HepG2 (cell line): ENCODE measurements at regions of chr7 and their contacts with region 1.

Region 1: DNA sequence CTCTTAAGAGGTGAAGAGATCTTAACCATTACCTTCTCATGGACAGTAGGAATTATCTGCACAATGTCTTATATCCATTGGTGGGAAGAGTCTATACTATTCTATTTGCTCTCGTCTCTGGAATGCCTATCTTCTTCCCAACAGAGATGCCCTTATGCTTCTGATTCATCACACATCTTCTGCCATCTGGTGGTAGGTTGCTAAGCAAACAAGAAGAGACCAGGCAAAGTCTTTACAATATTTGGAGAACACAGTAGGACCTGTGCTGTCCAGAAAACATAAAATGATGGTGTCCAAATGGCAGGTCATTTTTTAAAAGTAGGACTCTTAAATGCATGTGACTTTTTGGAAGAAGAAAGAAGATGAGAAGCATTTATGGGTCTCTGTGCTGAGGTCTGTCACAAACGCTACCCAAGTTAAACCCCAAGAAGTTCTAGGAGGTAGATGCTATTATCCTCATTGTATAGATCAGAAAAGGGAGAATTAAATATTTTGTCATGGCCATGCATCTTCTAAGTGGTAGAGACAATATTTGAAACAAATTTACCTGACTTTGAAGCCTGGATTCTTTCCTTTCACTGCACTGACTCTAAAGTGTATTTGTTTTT is 67.8 kb upstream of the NXPH1 start:
- DNase-seq: peak; percentile 37
- ATAC-seq: peak; percentile 77
- H3K4me3 ChIP-seq: no peak overlapping the region
- H3K27ac ChIP-seq: no peak overlapping the region
- H3K4me1 ChIP-seq: no peaks in the 10 kb centered on the region
- H3K27me3 ChIP-seq: no peaks in the 10 kb centered on the region
- CTCF ChIP-seq: peak; percentile 48
- EP300 ChIP-seq: no peak
- POLR2A ChIP-seq: no peak
- RAD21 ChIP-seq: no peak

Region 2: GRCh38 chr7:8149222-8149621 is 216.4 kb before region 1 on chr7:
- CTCF ChIA-PET with region 1: no interaction called
- POLR2A ChIA-PET with region 1: no interaction called
- in situ Hi-C with region 1: no loop called
- intact Hi-C with region 1: no loop called
- DNase-seq: no peak
- ATAC-seq: no peak
- H3K4me3 ChIP-seq: no peak overlapping the region
- H3K27ac ChIP-seq: no peak overlapping the region
- H3K4me1 ChIP-seq: no peaks in the 10 kb centered on the region
- H3K27me3 ChIP-seq: no peaks in the 10 kb centered on the region
- CTCF ChIP-seq: no peak
- EP300 ChIP-seq: no peak
- POLR2A ChIP-seq: no peak
- RAD21 ChIP-seq: no peak

Region 3: GRCh38 chr7:8277394-8277982 is 88.1 kb before region 1 on chr7:
- CTCF ChIA-PET with region 1: interaction called, 4 read pairs
- POLR2A ChIA-PET with region 1: no interaction called
- in situ Hi-C with region 1: no loop called
- intact Hi-C with region 1: loop called (anchors 1 kb)
- DNase-seq: peak; percentile 29
- ATAC-seq: peak; percentile 74
- H3K4me3 ChIP-seq: no peak overlapping the region
- H3K27ac ChIP-seq: no peak overlapping the region
- H3K4me1 ChIP-seq: no peaks in the 10 kb centered on the region
- H3K27me3 ChIP-seq: no peaks in the 10 kb centered on the region
- CTCF ChIP-seq: peak; percentile 51; the same call in 1 of the 2 replicates
- EP300 ChIP-seq: no peak
- POLR2A ChIP-seq: no peak
- RAD21 ChIP-seq: 0 out of 2 replicates have a peak, but pooled peaks have one; percentile 16

Region 4: DNA sequence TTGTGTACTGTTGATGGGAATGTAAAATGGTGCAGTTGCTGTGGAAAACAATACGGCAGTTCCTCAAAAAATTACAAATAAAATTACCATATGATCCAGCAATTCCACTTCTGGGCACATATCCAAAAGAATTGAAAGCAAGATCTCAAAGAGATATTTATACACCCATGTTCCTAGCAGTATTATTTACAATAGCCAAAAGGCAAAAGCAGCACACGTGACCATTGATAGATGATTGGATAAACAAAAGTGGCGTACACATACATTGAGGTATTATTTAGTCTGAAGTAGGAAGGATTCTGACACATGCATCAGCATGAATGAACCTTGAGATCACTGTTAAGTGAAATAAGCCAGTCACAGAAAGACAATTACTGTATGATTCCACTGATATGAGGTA is 38.5 kb after region 1 on chr7:
- CTCF ChIA-PET with region 1: no interaction called
- POLR2A ChIA-PET with region 1: no interaction called
- in situ Hi-C with region 1: no loop called
- intact Hi-C with region 1: no loop called
- DNase-seq: no peak
- ATAC-seq: no peak
- H3K4me3 ChIP-seq: no peak overlapping the region
- H3K27ac ChIP-seq: no peak overlapping the region
- H3K4me1 ChIP-seq: no peaks in the 10 kb centered on the region
- H3K27me3 ChIP-seq: no peaks in the 10 kb centered on the region
- CTCF ChIP-seq: no peak
- EP300 ChIP-seq: no peak
- POLR2A ChIP-seq: no peak
- RAD21 ChIP-seq: no peak